Naive thymus-derived CD8-positive, alpha-beta T cell (primary cell): ENCODE measurements at regions of chr21 and their contacts with region 1.

Region 1: DNA sequence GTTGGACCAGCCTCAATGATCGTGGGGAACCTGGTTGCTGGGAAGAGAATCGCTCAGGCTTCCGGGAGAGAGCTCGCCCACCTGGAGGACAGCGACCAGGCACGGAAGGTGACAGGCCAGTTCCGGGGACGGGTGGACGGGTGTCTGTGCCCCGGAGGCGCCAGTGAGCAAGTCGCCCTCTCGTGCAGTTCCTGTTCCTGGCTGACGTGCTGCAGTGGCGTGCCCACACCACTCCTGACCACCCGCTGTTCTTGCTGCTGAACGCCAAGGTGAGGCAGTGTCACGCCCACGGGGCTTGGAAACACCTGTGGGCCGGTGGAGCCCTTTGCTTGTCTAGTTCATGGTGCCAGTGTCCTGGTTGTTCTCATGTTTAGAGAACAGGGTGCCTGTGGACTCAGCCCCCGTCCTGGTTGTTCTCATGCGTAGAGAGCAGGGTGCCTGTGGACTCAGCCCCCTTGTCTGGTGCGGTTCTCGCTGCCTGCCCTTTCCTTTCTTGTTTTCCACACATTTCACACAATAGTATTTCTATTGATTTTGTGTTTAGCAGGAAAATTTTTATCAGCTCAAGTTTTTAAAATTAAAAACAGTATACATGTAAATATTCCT is 53.1 kb downstream of the S100B start:
- DNase-seq: peak in 9 of 10 donors; percentile 29 to 73 (median 50)
- ATAC-seq: peak; percentile 27 to 43
- H3K4me3 Mint-ChIP-seq: peak overlapping the region; percentile 62 to 90 (median 85)
- H3K27ac Mint-ChIP-seq: peak overlapping the region; percentile 97 to 100 (median 99)
- H3K4me1 Mint-ChIP-seq: peaks cover 39 to 91% (median 83%) of the 10 kb centered on the region in 4 donors
- H3K27me3 Mint-ChIP-seq: no peaks in the 10 kb centered on the region

Region 2: GRCh38 chr21:46374761-46375389 is 176.9 kb before region 1 on chr21:
- POLR2A ChIA-PET with region 1: no interaction called
- DNase-seq: no peak
- ATAC-seq: no peak
- H3K4me3 Mint-ChIP-seq: no peak overlapping the region
- H3K27ac Mint-ChIP-seq: peak overlapping the region in 1 of 10 donors; percentile 25
- H3K4me1 Mint-ChIP-seq: peaks cover 0 to 24% (median 7%) of the 10 kb centered on the region in 4 donors
- H3K27me3 Mint-ChIP-seq: no peaks in the 10 kb centered on the region

Region 3: GRCh38 chr21:46458315-46459023 is 93.3 kb before region 1 on chr21 and contains the start of gene DIP2A:
- POLR2A ChIA-PET with region 1: interaction called, 19 read pairs
- DNase-seq: peak; percentile 85 to 98 (median 94)
- ATAC-seq: peak; percentile 96 to 97
- H3K4me3 Mint-ChIP-seq: peak within 1 kb of the TSS; percentile 89 to 97 (median 92)
- H3K27ac Mint-ChIP-seq: peak within 1 kb of the TSS; percentile 78 to 98 (median 96)
- H3K4me1 Mint-ChIP-seq: peaks cover 21 to 67% (median 58%) of the 10 kb centered on the region in 4 donors
- H3K27me3 Mint-ChIP-seq: no peaks in the 10 kb centered on the region
- polyA plus RNA-seq, gene DIP2A: 26.8 to 33.6 (median 28.6) TPM

Region 4: DNA sequence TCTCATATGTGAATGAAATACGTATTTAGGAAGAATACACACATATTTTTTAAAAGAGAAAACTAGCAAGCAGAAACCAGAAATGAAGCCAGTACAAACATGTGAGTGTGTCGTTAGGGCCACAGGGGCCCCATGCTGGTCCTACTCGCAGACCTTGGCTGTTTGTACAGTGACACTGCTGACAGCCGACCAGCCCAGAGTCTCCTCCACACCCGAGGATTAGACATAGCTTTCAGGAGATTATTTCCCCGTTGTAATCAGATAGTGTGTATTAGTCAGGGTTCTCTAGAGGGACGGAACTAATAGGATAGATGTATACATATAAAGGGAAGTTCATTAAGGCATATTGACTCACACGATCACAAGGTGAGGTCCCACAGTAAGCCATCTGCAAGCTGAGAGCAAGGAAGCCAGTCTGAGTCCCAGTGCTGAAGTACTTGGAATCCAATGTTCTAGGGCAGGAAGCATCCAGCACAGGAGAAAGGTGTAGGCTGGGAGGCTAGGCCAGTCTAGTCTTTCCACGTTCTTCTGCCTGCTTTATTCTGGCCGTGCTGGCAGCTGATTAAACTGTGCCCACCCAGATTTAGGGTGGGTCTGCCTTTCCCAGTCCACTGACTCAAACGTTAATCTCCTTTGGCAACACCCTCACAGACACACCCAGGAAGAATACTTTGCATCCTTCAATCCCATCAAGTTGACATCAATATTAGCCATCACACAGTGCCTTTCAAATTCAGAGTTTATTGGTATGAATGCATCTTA is 41.8 kb before region 1 on chr21:
- POLR2A ChIA-PET with region 1: no interaction called
- DNase-seq: no peak
- ATAC-seq: no peak
- H3K4me3 Mint-ChIP-seq: no peak overlapping the region
- H3K27ac Mint-ChIP-seq: peak overlapping the region in 5 of 10 donors; percentile 16 to 78 (median 61)
- H3K4me1 Mint-ChIP-seq: peaks cover 0 to 41% (median 11%) of the 10 kb centered on the region in 4 donors
- H3K27me3 Mint-ChIP-seq: no peaks in the 10 kb centered on the region

Region 5: GRCh38 chr21:46540087-46540710 is 11.5 kb before region 1 on chr21:
- POLR2A ChIA-PET with region 1: interaction called, 37 read pairs
- DNase-seq: peak in 1 of 10 donors; percentile 47
- ATAC-seq: no peak
- H3K4me3 Mint-ChIP-seq: peak overlapping the region in 6 of 10 donors; percentile 4 to 77 (median 54)
- H3K27ac Mint-ChIP-seq: peak overlapping the region; percentile 30 to 95 (median 88)
- H3K4me1 Mint-ChIP-seq: peaks cover 24 to 97% (median 88%) of the 10 kb centered on the region in 4 donors
- H3K27me3 Mint-ChIP-seq: no peaks in the 10 kb centered on the region

Region 6: GRCh38 chr21:46605767-46606426 is 54.2 kb after region 1 on chr21:
- POLR2A ChIA-PET with region 1: interaction called, 29 read pairs
- DNase-seq: peak in 9 of 10 donors; percentile 37 to 80 (median 51)
- ATAC-seq: peak; percentile 88 to 91
- H3K4me3 Mint-ChIP-seq: peak overlapping the region; percentile 16 to 92 (median 85)
- H3K27ac Mint-ChIP-seq: peak overlapping the region; percentile 82 to 95 (median 93)
- H3K4me1 Mint-ChIP-seq: peaks cover 35 to 79% (median 57%) of the 10 kb centered on the region in 4 donors
- H3K27me3 Mint-ChIP-seq: no peaks in the 10 kb centered on the region

Region 7: GRCh38 chr21:46646541-46647154 is 94.9 kb after region 1 on chr21:
- POLR2A ChIA-PET with region 1: interaction called, 681 read pairs
- DNase-seq: no peak
- ATAC-seq: peak in 1 of 2 donors; percentile 35
- H3K4me3 Mint-ChIP-seq: peak overlapping the region in 9 of 10 donors; percentile 19 to 49 (median 37)
- H3K27ac Mint-ChIP-seq: peak overlapping the region; percentile 17 to 85 (median 71)
- H3K4me1 Mint-ChIP-seq: peaks cover 16 to 85% (median 55%) of the 10 kb centered on the region in 4 donors
- H3K27me3 Mint-ChIP-seq: no peaks in the 10 kb centered on the region